CD4-positive, alpha-beta memory T cell (primary cell): ENCODE measurements at regions of chr19 and their contacts with region 1.

Region 1: GRCh38 chr19:46529622-46530462 is 34.2 kb upstream of the PNMA8B start:
- DNase-seq: peak; percentile 62 to 75 (median 70)
- H3K4me3 ChIP-seq: no peak overlapping the region
- H3K4me3 Mint-ChIP-seq: peak overlapping the region in 2 of 8 donors; percentile 18 to 22
- H3K27ac ChIP-seq: no peak overlapping the region
- H3K27ac Mint-ChIP-seq: peak overlapping the region in 3 of 7 donors; percentile 29 to 66 (median 37)
- H3K4me1 ChIP-seq: peaks cover 14% of the 10 kb centered on the region
- H3K4me1 Mint-ChIP-seq: peaks cover 10 to 21% (median 13%) of the 10 kb centered on the region in 4 donors
- H3K27me3 ChIP-seq: no peaks in the 10 kb centered on the region
- H3K27me3 Mint-ChIP-seq: peaks cover 0 to 2% of the 10 kb centered on the region in 2 donors

Region 2: DNA sequence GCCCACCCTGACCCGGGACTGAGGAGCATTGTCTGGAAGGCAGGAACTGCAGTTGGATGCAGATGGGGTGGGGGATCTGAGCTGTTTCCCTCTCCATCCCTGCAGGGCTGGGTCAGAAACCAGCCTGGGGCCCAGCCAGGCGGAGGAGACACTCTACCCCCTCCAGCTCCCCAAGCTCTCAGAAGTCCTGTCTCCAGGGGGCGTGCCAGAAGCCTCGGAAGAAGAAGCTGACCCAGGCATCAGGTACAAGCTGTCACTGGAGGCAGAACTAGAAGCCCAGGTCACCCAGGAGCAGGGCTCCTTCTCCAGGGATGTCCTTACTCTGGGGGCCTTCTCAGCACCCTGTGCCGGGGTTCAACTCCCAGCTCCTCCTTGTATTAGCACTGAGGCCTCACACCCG is 776.3 kb before region 1 on chr19:
- CTCF ChIA-PET with region 1: no interaction called
- POLR2A ChIA-PET with region 1: no interaction called
- intact Hi-C with region 1: no loop called
- DNase-seq: no peak
- H3K4me3 ChIP-seq: no peak overlapping the region
- H3K4me3 Mint-ChIP-seq: no peak overlapping the region
- H3K27ac ChIP-seq: no peak overlapping the region
- H3K27ac Mint-ChIP-seq: no peak overlapping the region
- H3K4me1 ChIP-seq: no peaks in the 10 kb centered on the region
- H3K4me1 Mint-ChIP-seq: peaks cover 0 to 2% (median 0%) of the 10 kb centered on the region in 4 donors
- H3K27me3 ChIP-seq: no peaks in the 10 kb centered on the region
- H3K27me3 Mint-ChIP-seq: peaks cover 0 to 2% of the 10 kb centered on the region in 2 donors

Region 3: DNA sequence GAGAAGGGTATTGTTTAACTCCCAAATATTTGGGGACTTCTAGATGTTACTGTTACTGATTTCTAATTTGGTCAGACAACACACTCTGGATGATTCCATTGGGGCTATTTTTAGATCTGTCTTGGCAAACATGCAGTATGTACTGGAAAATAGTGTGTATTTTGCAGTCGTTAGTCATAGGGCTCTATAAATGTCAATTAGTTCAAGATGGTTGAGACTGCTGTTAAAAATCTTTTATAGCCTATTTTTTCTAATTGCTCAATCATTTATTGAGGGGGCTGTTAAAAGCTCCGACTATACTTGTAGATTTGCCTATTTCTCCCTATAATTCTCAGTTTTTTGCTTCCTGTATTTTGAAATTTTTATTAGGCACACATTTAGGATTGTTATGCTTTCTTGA is 151.6 kb before region 1 on chr19:
- CTCF ChIA-PET with region 1: no interaction called
- POLR2A ChIA-PET with region 1: no interaction called
- intact Hi-C with region 1: no loop called
- DNase-seq: no peak
- H3K4me3 ChIP-seq: no peak overlapping the region
- H3K4me3 Mint-ChIP-seq: no peak overlapping the region
- H3K27ac ChIP-seq: no peak overlapping the region
- H3K27ac Mint-ChIP-seq: peak overlapping the region in 1 of 7 donors; percentile 46
- H3K4me1 ChIP-seq: no peaks in the 10 kb centered on the region
- H3K4me1 Mint-ChIP-seq: peaks cover 0 to 9% (median 3%) of the 10 kb centered on the region in 4 donors
- H3K27me3 ChIP-seq: no peaks in the 10 kb centered on the region
- H3K27me3 Mint-ChIP-seq: no peaks in the 10 kb centered on the region

Region 4: GRCh38 chr19:46542428-46543230 is 12.8 kb after region 1 on chr19:
- CTCF ChIA-PET with region 1: interaction called, 70 read pairs
- POLR2A ChIA-PET with region 1: no interaction called
- intact Hi-C with region 1: loop called (anchors 1 kb)
- DNase-seq: peak; percentile 62 to 81 (median 66)
- H3K4me3 ChIP-seq: no peak overlapping the region
- H3K4me3 Mint-ChIP-seq: no peak overlapping the region
- H3K27ac ChIP-seq: no peak overlapping the region
- H3K27ac Mint-ChIP-seq: peak overlapping the region in 1 of 7 donors; percentile 16
- H3K4me1 ChIP-seq: peaks cover 3% of the 10 kb centered on the region
- H3K4me1 Mint-ChIP-seq: peaks cover 1 to 6% (median 5%) of the 10 kb centered on the region in 4 donors
- H3K27me3 ChIP-seq: no peaks in the 10 kb centered on the region
- H3K27me3 Mint-ChIP-seq: peaks cover 0 to under 1% of the 10 kb centered on the region in 2 donors

Region 5: GRCh38 chr19:46661020-46661731 is 131.3 kb after region 1 on chr19 and contains the start of gene DACT3:
- CTCF ChIA-PET with region 1: interaction called, 23 read pairs
- POLR2A ChIA-PET with region 1: interaction called, 8 read pairs
- intact Hi-C with region 1: no loop called
- DNase-seq: peak; percentile 99 to 100 (median 99)
- H3K4me3 ChIP-seq: peak within 1 kb of the TSS; percentile 48 to 64
- H3K4me3 Mint-ChIP-seq: peak within 1 kb of the TSS; percentile 82 to 88 (median 84)
- H3K27ac ChIP-seq: peak within 1 kb of the TSS; percentile 44
- H3K27ac Mint-ChIP-seq: peak within 1 kb of the TSS; percentile 76 to 97 (median 91)
- H3K4me1 ChIP-seq: peaks cover 27% of the 10 kb centered on the region
- H3K4me1 Mint-ChIP-seq: peaks cover 10 to 31% (median 15%) of the 10 kb centered on the region in 4 donors
- H3K27me3 ChIP-seq: peaks cover 18% of the 10 kb centered on the region
- H3K27me3 Mint-ChIP-seq: peaks cover 10 to 19% of the 10 kb centered on the region in 2 donors
- total RNA-seq, gene DACT3: not detected

Region 6: DNA sequence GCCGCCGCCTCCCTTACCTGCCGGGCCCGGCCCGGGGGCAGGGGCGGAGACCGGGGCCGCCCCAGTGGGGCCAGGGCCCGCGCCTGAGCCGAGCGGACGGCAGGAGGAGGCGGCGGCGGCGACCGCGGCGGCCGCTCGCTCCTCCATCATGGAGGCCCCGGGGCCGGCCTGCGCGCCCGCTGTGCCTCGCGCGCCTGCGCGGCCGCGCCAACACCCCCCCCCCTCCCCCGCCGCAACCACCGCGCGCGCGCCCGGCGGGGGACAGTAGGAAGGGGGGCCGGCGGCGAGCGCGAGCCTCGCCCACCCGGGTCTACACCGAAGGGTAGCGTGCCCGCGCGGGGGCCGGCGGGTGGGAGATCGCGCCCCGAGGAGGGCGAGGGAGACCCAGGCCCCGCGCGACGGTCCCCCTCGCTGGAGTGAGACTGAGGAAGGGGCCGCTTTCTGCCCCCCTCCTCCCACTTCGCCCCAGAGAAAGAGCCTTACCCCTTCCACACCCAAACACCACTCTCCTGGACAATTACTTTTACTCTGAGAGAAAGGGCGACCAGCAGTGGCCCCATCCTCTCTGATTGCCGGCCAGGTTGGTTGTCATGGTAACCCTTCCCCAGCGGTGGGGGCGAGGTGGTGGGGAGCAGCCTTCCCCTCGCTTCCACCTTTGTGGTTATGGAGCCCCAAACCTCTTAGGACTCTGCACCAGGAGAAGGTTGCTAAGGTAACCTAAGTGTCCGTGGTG is 216.6 kb after region 1 on chr19 and contains the start of gene STRN4:
- CTCF ChIA-PET with region 1: no interaction called
- POLR2A ChIA-PET with region 1: no interaction called
- intact Hi-C with region 1: loop called (anchors 1 kb)
- DNase-seq: peak; percentile 49 to 74 (median 52)
- H3K4me3 ChIP-seq: peak within 1 kb of the TSS; percentile 54 to 80
- H3K4me3 Mint-ChIP-seq: peak within 1 kb of the TSS; percentile 88 to 94 (median 90)
- H3K27ac ChIP-seq: peak within 1 kb of the TSS; percentile 76
- H3K27ac Mint-ChIP-seq: peak within 1 kb of the TSS; percentile 92 to 96 (median 95)
- H3K4me1 ChIP-seq: peaks cover 35% of the 10 kb centered on the region
- H3K4me1 Mint-ChIP-seq: peaks cover 35 to 64% (median 49%) of the 10 kb centered on the region in 4 donors
- H3K27me3 ChIP-seq: no peaks in the 10 kb centered on the region
- H3K27me3 Mint-ChIP-seq: no peaks in the 10 kb centered on the region
- total RNA-seq, gene STRN4: 81.2 to 88.8 TPM